ENCODE measurements at regions of chr5 and their contacts with region 1.

Region 1: GRCh38 chr5:150357326-150358260 is at the start of gene TCOF1:
- DNase-seq: peak; percentile 98
- ATAC-seq: peak; percentile 99 to 100 (median 99)
- H3K4me3 ChIP-seq: peak within 1 kb of the TSS; percentile 85
- H3K27ac ChIP-seq: peak within 1 kb of the TSS; percentile 78
- H3K4me1 ChIP-seq: peaks cover 8% of the 10 kb centered on the region
- H3K27me3 ChIP-seq: no peaks in the 10 kb centered on the region
- CTCF ChIP-seq: no peak
- total RNA-seq, gene TCOF1: 22.8 to 26.7 (median 23.6) TPM

Region 2: GRCh38 chr5:150161242-150162141 is 196.1 kb before region 1 on chr5:
- intact Hi-C with region 1: loop called (anchors 5 to 10 kb)
- DNase-seq: peak; percentile 85 to 92
- ATAC-seq: peak; percentile 80 to 92 (median 88)
- H3K4me3 ChIP-seq: no peak overlapping the region
- H3K27ac ChIP-seq: peak overlapping the region; percentile 55
- H3K4me1 ChIP-seq: peaks cover 19% of the 10 kb centered on the region
- H3K27me3 ChIP-seq: no peaks in the 10 kb centered on the region
- CTCF ChIP-seq: peak; percentile 98

Region 3: DNA sequence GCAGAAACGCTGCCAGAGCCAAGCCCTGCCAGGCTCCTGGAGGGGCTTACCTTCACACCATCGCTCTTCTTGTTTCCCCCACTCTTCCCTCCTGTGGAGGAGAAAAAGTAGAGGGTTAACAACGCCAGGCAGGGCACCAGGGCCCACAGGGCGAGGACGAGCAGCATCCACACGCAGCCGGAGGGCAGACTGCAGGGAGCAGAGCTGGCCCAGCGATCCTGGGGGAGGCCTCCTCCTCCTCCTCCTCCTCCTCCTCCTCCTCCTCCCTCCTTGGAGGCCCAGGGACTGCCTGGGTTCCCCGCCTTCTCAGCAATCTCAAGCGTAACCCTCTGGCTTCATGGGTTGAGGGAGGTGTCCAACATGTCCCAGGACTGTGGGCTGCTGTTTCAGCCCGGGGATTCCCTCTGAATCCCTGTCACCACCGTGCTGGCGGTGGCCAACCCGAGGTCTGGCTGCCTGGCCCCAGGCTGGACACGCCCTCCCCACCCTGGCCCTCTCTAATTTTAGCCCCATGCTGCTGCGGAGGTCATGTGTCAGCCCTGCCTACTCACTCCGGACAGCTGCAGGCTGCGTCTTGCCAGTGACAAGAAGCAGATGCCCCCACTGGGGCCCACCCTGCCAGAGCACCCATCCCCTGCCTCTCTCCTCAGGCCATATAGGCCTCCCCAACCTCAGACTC is 112.3 kb before region 1 on chr5:
- intact Hi-C with region 1: loop called (anchors 2 to 5 kb)
- DNase-seq: peak; percentile 83 to 95
- ATAC-seq: peak; percentile 83 to 90 (median 86)
- H3K4me3 ChIP-seq: peak overlapping the region; percentile 73
- H3K27ac ChIP-seq: peak overlapping the region; percentile 100
- H3K4me1 ChIP-seq: peaks cover 48% of the 10 kb centered on the region
- H3K27me3 ChIP-seq: no peaks in the 10 kb centered on the region
- CTCF ChIP-seq: no peak

Region 4: GRCh38 chr5:150791536-150791935 is 433.9 kb after region 1 on chr5:
- intact Hi-C with region 1: no loop called
- DNase-seq: no peak
- ATAC-seq: no peak
- H3K4me3 ChIP-seq: no peak overlapping the region
- H3K27ac ChIP-seq: no peak overlapping the region
- H3K4me1 ChIP-seq: peaks cover 3% of the 10 kb centered on the region
- H3K27me3 ChIP-seq: no peaks in the 10 kb centered on the region
- CTCF ChIP-seq: no peak

Region 5: DNA sequence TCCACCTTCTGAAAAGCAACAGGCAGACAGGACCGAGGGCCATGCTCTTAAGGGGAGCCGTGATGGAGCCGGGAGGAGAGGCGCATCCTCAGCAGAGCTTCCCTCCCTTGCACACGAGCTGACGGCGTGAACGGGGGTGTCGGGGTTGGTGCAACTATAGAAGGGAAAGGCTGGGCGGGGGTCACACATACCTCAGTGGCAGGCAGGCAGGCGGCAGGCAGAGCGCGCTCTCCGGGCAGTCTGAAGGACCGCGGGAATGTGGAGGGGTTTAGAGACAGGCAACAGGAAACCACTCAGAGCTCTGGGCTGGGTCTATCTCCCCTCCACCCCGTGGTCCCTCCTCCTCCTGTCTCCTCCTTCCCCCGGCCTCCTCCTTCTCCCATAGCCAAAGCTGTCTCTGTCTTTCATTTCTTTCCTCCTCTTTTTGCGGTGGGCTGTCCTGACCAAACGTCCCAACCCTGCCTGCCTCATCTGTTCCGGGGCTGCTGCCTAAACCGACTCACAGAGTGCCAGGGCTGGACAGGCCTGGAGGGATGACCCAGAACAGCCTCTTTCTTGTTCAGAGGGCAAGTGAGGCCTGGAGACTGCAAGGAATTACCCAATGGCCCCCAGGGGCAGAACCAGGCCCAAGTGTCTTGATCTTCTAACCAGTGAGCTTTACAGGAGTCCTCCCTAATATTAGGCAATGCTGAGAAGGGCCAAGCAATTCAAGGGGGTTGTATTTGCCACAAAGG is 1329.2 kb after region 1 on chr5 and contains the start of gene SPARC:
- intact Hi-C with region 1: no loop called
- DNase-seq: peak; percentile 89 to 94
- ATAC-seq: peak; percentile 72 to 77 (median 74)
- H3K4me3 ChIP-seq: peak within 1 kb of the TSS; percentile 78
- H3K27ac ChIP-seq: peak within 1 kb of the TSS; percentile 89
- H3K4me1 ChIP-seq: peaks cover 29% of the 10 kb centered on the region
- H3K27me3 ChIP-seq: no peaks in the 10 kb centered on the region
- CTCF ChIP-seq: no peak
- total RNA-seq, gene SPARC: 175 to 687 (median 372) TPM